Posterior vena cava (tissue), 2 donors: ENCODE measurements at regions of chr12 and their contacts with region 1.

Region 1: DNA sequence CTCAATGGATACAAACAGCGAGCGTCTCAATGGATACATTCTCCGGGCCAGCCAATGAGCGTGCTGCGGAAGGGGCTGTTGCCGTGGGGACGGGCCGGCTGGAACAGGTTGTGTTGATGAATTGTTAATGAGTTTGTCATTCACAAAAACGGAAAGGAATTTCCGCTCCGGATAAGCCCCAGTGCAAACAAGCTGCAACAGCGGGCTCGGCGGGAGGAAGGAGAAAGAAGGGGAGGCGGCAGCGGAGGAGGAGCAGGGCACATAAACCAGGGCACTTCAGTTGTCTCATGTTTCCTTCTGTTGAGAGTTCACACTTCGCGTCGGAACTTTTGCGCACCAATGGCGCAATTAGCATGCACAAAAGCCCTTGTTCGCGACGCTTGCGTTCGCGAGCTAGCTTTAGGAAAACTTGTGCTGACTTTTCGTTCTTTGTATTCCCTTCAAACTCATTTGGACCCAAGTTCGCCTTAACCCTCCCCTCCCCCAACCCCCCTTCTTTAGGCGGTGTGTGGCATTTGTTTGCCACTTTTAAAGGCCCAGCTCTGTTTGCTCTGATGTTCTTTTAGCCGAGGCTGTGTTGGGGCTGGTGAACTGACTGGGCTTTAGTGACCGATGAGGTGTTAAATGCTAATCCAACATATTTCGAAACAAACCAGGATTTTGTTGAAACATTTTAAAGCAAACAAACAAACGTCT is at the start of gene DUSP6:
- DNase-seq: peak; percentile 98
- total RNA-seq, gene DUSP6: 42.2 to 49.6 TPM

Region 2: GRCh38 chr12:89162704-89163261 is 189.9 kb before region 1 on chr12:
- intact Hi-C with region 1: loop called in 1 of 2 experiments (anchors 5 kb)
- DNase-seq: peak; percentile 87

Region 3: DNA sequence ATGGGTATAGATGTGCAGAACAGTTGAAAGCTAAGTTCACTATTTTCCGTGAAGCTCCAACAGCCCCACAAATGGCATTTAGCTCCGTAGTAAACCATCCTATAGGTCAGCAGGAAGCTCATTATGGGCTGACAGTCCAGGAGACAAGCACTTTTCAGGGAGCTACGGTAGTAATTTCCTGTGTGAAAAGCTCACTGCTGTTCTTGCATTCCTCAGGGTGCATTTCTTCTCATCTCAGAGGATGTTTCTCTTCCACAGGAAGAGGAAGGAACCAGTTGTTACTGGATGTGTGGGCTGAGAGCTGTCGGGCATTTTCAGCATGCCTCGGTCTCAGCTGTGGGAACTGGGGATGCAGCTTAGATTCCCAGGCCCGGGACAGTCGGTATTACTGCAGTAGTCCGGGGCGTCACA is 99.2 kb after region 1 on chr12:
- intact Hi-C with region 1: loop called (anchors 5 to 10 kb)
- DNase-seq: no peak